ENCODE measurements at regions of chrX and their contacts with region 1.

Region 1: DNA sequence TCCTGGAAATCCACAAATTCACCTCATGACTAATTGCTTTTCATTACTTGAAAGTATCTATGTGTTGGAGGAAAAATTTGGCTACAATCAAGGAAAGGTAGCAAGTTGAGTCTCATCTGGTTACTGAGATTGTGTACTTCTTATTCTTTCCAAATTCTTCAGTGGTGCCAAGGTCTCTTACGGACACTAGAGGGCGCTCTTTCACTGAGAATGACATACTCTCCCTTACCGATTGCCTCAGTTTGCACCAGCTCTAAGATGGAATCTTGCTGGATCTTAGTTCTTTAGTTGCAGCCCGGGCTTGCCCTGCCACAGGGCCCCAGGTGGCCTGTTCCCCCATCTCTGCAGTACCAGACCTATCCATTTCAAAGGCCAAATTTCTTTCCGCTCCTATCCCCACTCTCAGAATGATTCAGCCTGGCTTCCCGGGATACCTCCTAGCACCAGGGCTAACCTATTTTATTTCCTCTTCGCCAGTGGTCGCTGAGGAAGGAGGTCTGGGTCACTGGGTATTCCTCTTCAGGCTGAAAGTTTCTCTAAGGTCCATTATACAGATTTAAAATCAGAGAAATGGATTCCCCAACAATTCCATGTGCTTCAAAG is 24.6 kb upstream of the GPR50 start:
- DNase-seq: peak; percentile 45 to 57 (median 50)
- ATAC-seq: peak; percentile 91
- H3K4me3 ChIP-seq: no peak overlapping the region
- H3K27ac ChIP-seq: no peak overlapping the region
- H3K4me1 ChIP-seq: no peaks in the 10 kb centered on the region; a peak in 1 of 5 replicates
- H3K27me3 ChIP-seq: no peaks in the 10 kb centered on the region; a peak in 1 of 5 replicates
- CTCF ChIP-seq: peak; percentile 59 to 78 (median 72)
- EP300 ChIP-seq: no peak
- POLR2A ChIP-seq: no peak
- RAD21 ChIP-seq: peak; percentile 82 to 84

Region 2: DNA sequence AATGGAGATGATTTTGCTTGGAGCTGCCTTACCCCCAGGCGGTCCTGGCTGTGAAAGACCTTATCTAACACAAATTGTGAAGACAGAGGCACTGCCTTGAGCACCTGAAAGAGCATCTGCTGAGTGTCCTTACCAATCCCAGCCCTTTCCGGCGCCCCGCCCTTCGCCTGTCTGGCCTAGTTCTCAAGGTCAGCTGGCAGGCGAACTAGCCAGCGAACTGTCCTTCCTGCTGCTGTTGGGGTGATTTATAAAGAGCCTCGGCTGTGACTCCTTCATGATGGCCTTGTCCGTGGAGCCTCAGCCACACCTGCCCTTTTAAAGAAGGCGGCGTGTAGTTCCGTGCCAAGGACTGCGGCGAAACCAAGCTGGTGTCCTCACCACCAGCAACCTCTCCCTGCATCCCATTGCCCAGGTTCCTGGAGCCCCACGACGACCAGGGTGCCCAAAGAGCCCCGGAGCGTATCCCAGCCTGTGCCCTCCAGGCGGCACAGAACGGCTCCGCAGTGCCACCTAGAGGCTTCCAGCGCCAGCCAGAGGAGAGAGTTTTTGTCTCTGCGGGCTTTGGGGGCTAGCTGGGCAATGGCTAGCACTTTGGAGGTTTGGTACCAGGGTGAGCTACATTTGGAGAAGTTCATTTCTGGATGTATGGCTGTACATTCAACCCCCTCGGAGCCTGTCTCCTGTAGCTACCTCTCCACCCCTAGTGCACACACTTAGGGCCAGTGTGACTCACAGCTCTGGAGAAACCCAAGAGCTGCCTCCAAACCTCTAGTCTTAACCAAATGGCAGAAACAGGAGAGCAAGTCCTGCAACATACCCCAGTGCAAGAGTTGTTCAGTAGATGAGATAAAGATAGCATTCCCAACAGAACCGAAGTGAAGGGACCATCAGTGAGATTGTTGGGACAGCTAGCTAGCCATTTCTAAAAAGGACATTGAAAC is 208.4 kb after region 1 on chrX:
- CTCF ChIA-PET with region 1: interaction called, 4 read pairs
- POLR2A ChIA-PET with region 1: no interaction called
- in situ Hi-C with region 1: loop called (anchors 25 kb)
- intact Hi-C with region 1: loop called (anchors 5 kb)
- DNase-seq: peak; percentile 8 to 31 (median 20)
- ATAC-seq: peak; percentile 93
- H3K4me3 ChIP-seq: no peak overlapping the region
- H3K27ac ChIP-seq: no peak overlapping the region
- H3K4me1 ChIP-seq: peaks cover 0 to 5% of the 10 kb centered on the region in 2 experiments; a peak in 2 of 5 replicates
- H3K27me3 ChIP-seq: peaks cover 0 to 9% of the 10 kb centered on the region in 2 experiments; a peak in 1 of 5 replicates
- CTCF ChIP-seq: peak; percentile 65 to 73 (median 71)
- EP300 ChIP-seq: no peak
- POLR2A ChIP-seq: no peak
- RAD21 ChIP-seq: peak; percentile 41 to 57

Region 3: DNA sequence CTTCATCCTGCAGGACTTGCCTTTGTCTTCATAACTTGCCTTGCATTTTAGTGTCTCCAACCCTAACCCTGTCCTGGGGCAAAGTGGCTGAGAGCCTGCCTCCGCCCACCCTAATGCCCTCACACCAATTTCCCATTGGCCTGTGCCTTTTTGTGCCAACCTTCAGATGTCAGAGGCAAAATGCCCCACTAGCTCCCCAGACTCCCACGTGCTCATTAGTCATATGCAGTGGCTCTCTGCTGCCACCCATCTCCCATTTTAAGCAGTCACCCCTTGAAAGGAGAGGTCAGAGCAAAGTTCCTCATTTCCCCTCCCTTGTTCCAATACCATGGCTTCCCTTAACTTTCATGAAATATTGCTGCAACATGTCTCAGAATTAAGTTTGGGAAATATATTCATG is 336.9 kb after region 1 on chrX:
- CTCF ChIA-PET with region 1: interaction called, 5 read pairs
- POLR2A ChIA-PET with region 1: no interaction called
- in situ Hi-C with region 1: loop called (anchors 25 kb)
- intact Hi-C with region 1: loop called (anchors 5 kb)
- DNase-seq: peak; percentile 25 to 45 (median 29)
- ATAC-seq: peak; percentile 81
- H3K4me3 ChIP-seq: no peak overlapping the region
- H3K27ac ChIP-seq: no peak overlapping the region
- H3K4me1 ChIP-seq: no peaks in the 10 kb centered on the region
- H3K27me3 ChIP-seq: no peaks in the 10 kb centered on the region; a peak in 3 of 5 replicates
- CTCF ChIP-seq: peak; percentile 51 to 61 (median 55)
- EP300 ChIP-seq: no peak
- POLR2A ChIP-seq: no peak
- RAD21 ChIP-seq: peak; percentile 37 to 53; a peak in 3 of 4 replicates

Region 4: DNA sequence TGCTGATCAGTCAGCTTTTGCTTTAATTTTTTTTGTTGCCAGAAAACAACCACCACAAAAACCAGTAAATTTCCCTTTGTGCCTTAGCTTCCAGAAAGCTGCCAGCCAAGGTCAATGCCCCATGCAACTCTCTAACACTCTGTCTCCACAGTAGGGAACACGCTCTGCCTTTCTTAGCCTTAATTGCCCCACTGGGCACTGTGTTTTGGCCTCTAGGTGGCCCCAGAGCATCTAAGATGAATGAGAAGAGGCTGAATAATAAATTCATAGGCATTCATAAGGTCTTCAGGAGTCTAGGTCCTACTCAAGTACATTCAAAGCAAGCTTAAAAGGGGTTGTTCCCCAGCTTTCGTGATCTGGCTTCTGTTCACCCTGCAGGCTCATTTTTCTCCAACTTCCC is 354.0 kb after region 1 on chrX:
- CTCF ChIA-PET with region 1: no interaction called
- POLR2A ChIA-PET with region 1: no interaction called
- in situ Hi-C with region 1: no loop called
- intact Hi-C with region 1: loop called (anchors 5 kb)
- DNase-seq: peak; percentile 16 to 49 (median 22)
- ATAC-seq: peak; percentile 93
- H3K4me3 ChIP-seq: no peak overlapping the region
- H3K27ac ChIP-seq: no peak overlapping the region
- H3K4me1 ChIP-seq: no peaks in the 10 kb centered on the region; a peak in 1 of 5 replicates
- H3K27me3 ChIP-seq: no peaks in the 10 kb centered on the region
- CTCF ChIP-seq: peak; percentile 57 to 77 (median 69); a peak in 5 of 6 replicates
- EP300 ChIP-seq: no peak
- POLR2A ChIP-seq: no peak
- RAD21 ChIP-seq: peak; percentile 68 to 78

Region 5: DNA sequence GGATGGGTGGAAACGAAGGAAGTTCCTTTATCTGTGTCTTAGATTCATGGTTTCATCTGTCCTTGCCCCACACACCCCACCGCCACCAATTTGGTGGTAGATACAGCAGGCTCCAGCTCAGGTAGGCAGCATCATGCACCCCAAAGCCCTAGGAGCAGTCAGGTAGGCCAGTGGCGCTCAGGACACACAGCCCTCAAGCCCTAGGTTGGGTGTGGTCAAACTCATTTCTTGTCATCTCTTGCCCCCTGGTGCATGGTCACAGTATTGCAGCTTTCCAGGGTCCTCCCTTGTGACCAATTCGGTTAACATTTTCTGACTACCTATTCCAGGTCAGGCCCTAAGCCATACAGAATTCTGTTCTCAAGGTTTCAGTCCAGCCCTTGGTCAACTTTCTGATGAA is 529.0 kb after region 1 on chrX:
- CTCF ChIA-PET with region 1: interaction called, 18 read pairs
- POLR2A ChIA-PET with region 1: no interaction called
- in situ Hi-C with region 1: loop called (anchors 5 kb)
- intact Hi-C with region 1: loop called (anchors 1 kb)
- DNase-seq: peak; percentile 62 to 78 (median 72)
- ATAC-seq: peak; percentile 99
- H3K4me3 ChIP-seq: no peak overlapping the region
- H3K27ac ChIP-seq: no peak overlapping the region
- H3K4me1 ChIP-seq: peaks cover 0 to 5% of the 10 kb centered on the region in 2 experiments; a peak in 3 of 5 replicates
- H3K27me3 ChIP-seq: peaks cover 0 to 12% of the 10 kb centered on the region in 2 experiments; a peak in 2 of 5 replicates
- CTCF ChIP-seq: peak; percentile 65 to 82 (median 81)
- EP300 ChIP-seq: no peak
- POLR2A ChIP-seq: no peak
- RAD21 ChIP-seq: peak; percentile 87 to 90

Region 6: GRCh38 chrX:152632445-152633097 is 1480.8 kb after region 1 on chrX:
- CTCF ChIA-PET with region 1: no interaction called
- POLR2A ChIA-PET with region 1: no interaction called
- in situ Hi-C with region 1: no loop called
- intact Hi-C with region 1: loop called (anchors 5 kb)
- DNase-seq: peak; percentile 25 to 60 (median 45)
- ATAC-seq: 0 out of 3 replicates have a peak, but pooled peaks have one; percentile 50
- H3K4me3 ChIP-seq: no peak overlapping the region
- H3K27ac ChIP-seq: no peak overlapping the region
- H3K4me1 ChIP-seq: peaks cover under 1 to 8% of the 10 kb centered on the region in 2 experiments; a peak in 4 of 5 replicates
- H3K27me3 ChIP-seq: no peaks in the 10 kb centered on the region
- CTCF ChIP-seq: peak; percentile 61 to 75 (median 72)
- EP300 ChIP-seq: no peak
- POLR2A ChIP-seq: no peak
- RAD21 ChIP-seq: peak; percentile 67 to 74

Measured in K562 (cell line).